ENCODE measurements at regions of chr3 and their contacts with region 1.

Region 1: GRCh38 chr3:141370065-141370533 is 1.8 kb downstream of the ZBTB38 start:
- DNase-seq: peak; percentile 17 to 83 (median 79)
- H3K4me3 ChIP-seq: no peak overlapping the region
- H3K4me3 Mint-ChIP-seq: no peak overlapping the region
- H3K27ac ChIP-seq: peak overlapping the region; percentile 61
- H3K27ac Mint-ChIP-seq: peak overlapping the region in 3 of 8 donors; percentile 2 to 63 (median 53)
- H3K4me1 ChIP-seq: peaks cover 3% of the 10 kb centered on the region
- H3K4me1 Mint-ChIP-seq: peaks cover 7 to 11% (median 8%) of the 10 kb centered on the region in 3 donors
- H3K27me3 ChIP-seq: no peaks in the 10 kb centered on the region
- H3K27me3 Mint-ChIP-seq: peaks cover 0 to 2% of the 10 kb centered on the region in 2 donors

Region 2: DNA sequence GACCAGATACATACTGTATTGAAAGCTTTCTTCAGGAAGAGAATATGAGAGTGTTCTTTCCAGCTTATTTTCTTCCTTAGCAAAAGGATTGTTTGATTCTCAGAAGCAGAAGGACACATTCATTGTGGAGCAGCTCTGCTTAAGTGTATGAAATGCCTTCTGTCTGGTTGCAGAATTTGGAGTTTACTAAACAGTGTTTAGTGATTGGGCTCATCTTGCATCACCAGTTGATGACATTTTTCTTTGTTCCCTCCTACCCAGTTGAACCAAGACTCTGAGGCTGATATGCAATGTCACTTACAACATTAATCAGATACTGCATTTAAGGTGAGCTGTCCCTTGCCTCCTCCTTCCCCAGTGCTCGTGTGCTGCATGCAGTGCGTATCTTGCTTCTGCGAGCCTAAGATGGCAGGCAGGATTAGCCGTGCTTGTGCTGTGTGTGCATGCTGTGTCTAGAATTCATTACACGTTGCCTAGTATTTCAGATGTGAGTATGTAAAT is 16.6 kb after region 1 on chr3:
- CTCF ChIA-PET with region 1: interaction called, 19 read pairs
- POLR2A ChIA-PET with region 1: no interaction called
- DNase-seq: no peak
- H3K4me3 ChIP-seq: no peak overlapping the region
- H3K4me3 Mint-ChIP-seq: peak overlapping the region; percentile 2 to 79 (median 67)
- H3K27ac ChIP-seq: no peak overlapping the region
- H3K27ac Mint-ChIP-seq: peak overlapping the region in 4 of 8 donors; percentile 7 to 51 (median 36)
- H3K4me1 ChIP-seq: no peaks in the 10 kb centered on the region
- H3K4me1 Mint-ChIP-seq: peaks cover 13 to 25% (median 21%) of the 10 kb centered on the region in 3 donors
- H3K27me3 ChIP-seq: no peaks in the 10 kb centered on the region
- H3K27me3 Mint-ChIP-seq: no peaks in the 10 kb centered on the region

Region 3: DNA sequence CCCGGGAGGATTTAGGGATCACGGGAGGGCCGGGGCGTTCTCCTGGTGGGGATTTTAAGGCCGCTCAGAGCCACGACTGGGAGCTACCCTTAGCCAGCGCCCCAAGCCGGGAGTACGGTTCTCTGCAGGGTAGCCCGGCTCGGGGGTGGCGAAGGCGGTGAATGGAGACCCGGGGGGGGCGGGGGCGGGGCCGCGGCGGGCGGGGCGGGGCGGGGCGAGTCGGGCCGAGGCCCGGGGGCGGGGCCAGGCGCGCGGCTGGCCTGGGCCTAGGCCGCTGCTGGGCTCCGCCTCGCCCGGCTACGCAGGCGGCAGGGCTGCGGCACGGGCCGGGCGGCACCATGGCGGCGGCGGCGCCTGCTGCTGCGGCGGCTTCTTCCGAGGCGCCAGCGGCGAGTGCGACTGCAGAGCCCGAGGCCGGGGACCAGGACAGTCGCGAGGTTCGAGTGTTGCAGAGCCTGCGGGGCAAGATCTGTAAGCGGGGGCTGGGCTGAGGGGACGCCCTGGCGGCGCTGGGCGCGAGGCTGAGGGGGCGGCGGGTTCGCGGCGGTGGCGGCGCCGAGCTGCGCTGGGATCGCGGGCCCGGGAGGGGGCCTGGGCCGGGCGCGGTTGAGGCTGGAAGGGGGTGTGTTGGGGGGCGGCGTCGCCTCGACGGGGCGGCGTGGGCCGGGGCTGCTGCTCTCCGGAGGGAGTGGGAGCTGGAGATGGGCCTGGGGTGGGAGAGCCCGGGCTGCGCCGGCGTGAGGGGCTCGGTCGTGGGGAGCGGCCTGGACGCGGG is 116.8 kb after region 1 on chr3 and contains the start of gene RASA2:
- CTCF ChIA-PET with region 1: no interaction called
- POLR2A ChIA-PET with region 1: no interaction called
- DNase-seq: peak; percentile 60 to 79 (median 75)
- H3K4me3 ChIP-seq: peak within 1 kb of the TSS; percentile 66
- H3K4me3 Mint-ChIP-seq: peak within 1 kb of the TSS; percentile 88 to 95 (median 93)
- H3K27ac ChIP-seq: peak within 1 kb of the TSS; percentile 78
- H3K27ac Mint-ChIP-seq: peak within 1 kb of the TSS; percentile 93 to 99 (median 96)
- H3K4me1 ChIP-seq: peaks cover 61% of the 10 kb centered on the region
- H3K4me1 Mint-ChIP-seq: peaks cover 57 to 72% (median 67%) of the 10 kb centered on the region in 3 donors
- H3K27me3 ChIP-seq: no peaks in the 10 kb centered on the region
- H3K27me3 Mint-ChIP-seq: peaks cover 0 to 3% of the 10 kb centered on the region in 2 donors
- total RNA-seq, gene RASA2: 34.0 to 36.4 TPM

Measured in CD8-positive, alpha-beta memory T cell (primary cell).